Endothelial cell of umbilical vein (primary cell): ENCODE measurements at regions of chr9 and their contacts with region 1.

Region 1: DNA sequence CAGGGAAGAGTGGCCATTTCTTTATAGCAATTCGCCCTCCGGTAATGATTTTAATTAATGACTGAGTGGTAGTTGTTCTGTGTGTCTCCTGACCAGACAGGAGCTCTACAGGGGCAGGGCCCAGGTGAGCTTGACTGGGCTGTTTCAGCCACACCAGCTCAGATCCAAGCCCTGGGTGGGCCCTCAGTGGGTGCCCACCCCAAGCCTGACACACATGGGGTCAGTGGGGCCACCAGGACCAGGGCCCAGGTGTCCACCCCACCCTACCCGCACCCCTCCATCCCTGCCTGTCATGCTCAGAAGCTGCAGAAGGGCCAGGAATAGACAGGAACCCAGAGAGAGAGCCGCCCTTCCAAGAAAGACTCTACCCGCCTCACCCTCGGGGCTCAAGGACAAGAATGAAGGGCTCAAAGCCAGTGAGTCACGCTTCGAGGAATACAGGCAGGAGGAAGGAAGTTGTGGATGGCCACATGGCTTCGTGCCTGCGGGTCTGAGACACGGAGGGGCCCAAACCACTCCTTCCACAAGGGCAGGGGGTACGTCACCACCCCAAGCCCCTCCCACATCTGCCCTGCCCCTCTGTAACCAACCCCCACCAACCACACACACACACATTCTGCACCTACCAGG is 56.2 kb upstream of the STXBP1 start:
- DNase-seq: peak; percentile 93
- H3K4me3 ChIP-seq: no peak overlapping the region
- H3K27ac ChIP-seq: peak overlapping the region; percentile 95
- H3K4me1 ChIP-seq: peaks cover 56% of the 10 kb centered on the region
- H3K27me3 ChIP-seq: no peaks in the 10 kb centered on the region
- CTCF ChIP-seq: no peak
- POLR2A ChIP-seq: peak; percentile 51

Region 2: GRCh38 chr9:127525401-127526187 is 30.3 kb before region 1 on chr9:
- CTCF ChIA-PET with region 1: interaction called, 12 read pairs
- POLR2A ChIA-PET with region 1: interaction called, 3 read pairs
- dilution Hi-C with region 1: no loop called
- intact Hi-C with region 1: loop called (anchors 1 kb)
- DNase-seq: no peak
- H3K4me3 ChIP-seq: no peak overlapping the region
- H3K27ac ChIP-seq: no peak overlapping the region
- H3K4me1 ChIP-seq: peaks cover 51% of the 10 kb centered on the region
- H3K27me3 ChIP-seq: no peaks in the 10 kb centered on the region
- CTCF ChIP-seq: peak; percentile 53 to 55
- POLR2A ChIP-seq: no peak

Region 3: GRCh38 chr9:127545196-127546124 is 10.4 kb before region 1 on chr9:
- CTCF ChIA-PET with region 1: interaction called, 21 read pairs
- POLR2A ChIA-PET with region 1: no interaction called
- dilution Hi-C with region 1: no loop called
- intact Hi-C with region 1: loop called (anchors 1 kb)
- DNase-seq: peak; percentile 47
- H3K4me3 ChIP-seq: no peak overlapping the region
- H3K27ac ChIP-seq: peak overlapping the region; percentile 34
- H3K4me1 ChIP-seq: peaks cover 39% of the 10 kb centered on the region
- H3K27me3 ChIP-seq: no peaks in the 10 kb centered on the region
- CTCF ChIP-seq: no peak
- POLR2A ChIP-seq: no peak

Region 4: GRCh38 chr9:127930231-127931091 is 374.6 kb after region 1 on chr9 and contains the start of gene PIP5KL1:
- CTCF ChIA-PET with region 1: no interaction called
- POLR2A ChIA-PET with region 1: no interaction called
- dilution Hi-C with region 1: no loop called
- intact Hi-C with region 1: no loop called
- DNase-seq: peak; percentile 84
- H3K4me3 ChIP-seq: peak within 1 kb of the TSS; percentile 37 to 54 (median 43)
- H3K27ac ChIP-seq: peak within 1 kb of the TSS; percentile 67
- H3K4me1 ChIP-seq: peaks cover 17% of the 10 kb centered on the region
- H3K27me3 ChIP-seq: peaks cover 3 to 6% of the 10 kb centered on the region in 2 experiments
- CTCF ChIP-seq: peak in 1 of 2 donors; percentile 21
- POLR2A ChIP-seq: peak; percentile 44
- total RNA-seq, gene PIP5KL1: 2.9 and 3.8 TPM in 2 replicates